ENCODE measurements at regions of chr5 and their contacts with region 1.

Region 1: DNA sequence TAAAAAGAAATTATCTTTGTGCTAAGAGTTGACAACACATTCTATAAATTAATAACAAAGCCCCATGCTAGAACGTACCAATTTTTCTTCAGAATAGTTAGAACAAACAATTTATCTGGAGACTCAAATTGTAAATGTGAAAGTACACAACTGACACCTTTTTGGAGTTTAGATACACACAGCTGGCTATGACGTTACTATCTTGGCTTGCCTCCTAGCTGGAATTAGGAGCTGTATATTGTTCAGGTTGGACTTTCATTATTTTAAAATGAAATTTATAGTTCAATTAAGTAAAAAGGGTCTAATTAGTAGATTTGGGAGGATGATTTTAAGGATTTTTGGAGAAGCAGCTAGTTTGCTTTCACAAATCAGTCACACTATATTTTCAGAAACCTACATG is 393.9 kb upstream of the RIOK2 start:
- DNase-seq: no peak
- H3K4me3 ChIP-seq: no peak overlapping the region
- H3K27me3 ChIP-seq: no peaks in the 10 kb centered on the region
- CTCF ChIP-seq: no peak

Region 2: GRCh38 chr5:97591781-97592180 is 14.8 kb after region 1 on chr5:
- CTCF ChIA-PET with region 1: interaction called, 12 read pairs
- POLR2A ChIA-PET with region 1: no interaction called
- DNase-seq: no peak
- H3K4me3 ChIP-seq: no peak overlapping the region
- H3K27me3 ChIP-seq: no peaks in the 10 kb centered on the region
- CTCF ChIP-seq: no peak

Region 3: DNA sequence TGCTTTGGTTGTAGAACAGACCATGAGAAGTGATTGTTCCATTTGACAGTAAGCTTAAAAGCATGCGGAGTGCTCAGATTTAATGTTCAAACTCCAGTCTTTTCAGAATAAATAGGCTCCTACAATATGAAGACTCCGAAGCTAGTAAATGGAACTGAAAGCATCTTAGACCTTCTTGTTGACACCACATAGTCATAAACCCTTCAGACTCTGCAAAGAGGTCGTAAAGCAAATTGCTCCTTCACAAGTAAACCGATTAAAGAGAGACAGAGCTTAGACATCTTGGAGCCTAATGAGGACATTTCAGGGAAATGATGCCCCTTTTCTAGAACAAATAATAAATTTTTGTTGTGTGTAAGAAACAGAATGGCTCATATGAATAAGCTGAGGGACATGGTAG is 117.1 kb after region 1 on chr5:
- CTCF ChIA-PET with region 1: no interaction called
- POLR2A ChIA-PET with region 1: no interaction called
- DNase-seq: peak; percentile 4
- H3K4me3 ChIP-seq: no peak overlapping the region
- H3K27me3 ChIP-seq: no peaks in the 10 kb centered on the region
- CTCF ChIP-seq: no peak